GM12878 (cell line): ENCODE measurements at regions of chr15 and their contacts with region 1.

Region 1: DNA sequence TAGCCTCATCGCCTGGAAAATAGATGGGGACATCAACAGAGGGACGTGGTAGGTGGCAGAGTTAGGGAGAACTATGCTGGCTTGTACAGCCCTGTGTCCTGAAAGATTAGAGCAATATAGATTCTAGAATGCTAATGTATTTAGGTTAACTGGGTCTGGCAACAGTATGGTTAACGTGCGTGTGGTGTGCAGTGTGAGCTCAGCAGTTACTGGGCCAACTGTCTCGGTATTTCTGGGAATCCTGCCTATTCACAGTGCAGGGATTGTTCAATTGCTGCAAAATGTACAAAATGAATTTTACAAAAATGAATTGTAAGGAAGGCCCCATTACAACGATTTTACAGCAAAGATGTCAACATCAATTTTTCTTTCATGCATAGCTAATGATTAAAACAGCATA is 20.6 kb downstream of the MEIS2 start:
- DNase-seq: no peak
- ATAC-seq: no peak
- H3K4me3 ChIP-seq: no peak overlapping the region
- H3K27ac ChIP-seq: no peak overlapping the region
- H3K4me1 ChIP-seq: peaks cover 5% of the 10 kb centered on the region; the same call in 1 of the 2 replicates
- H3K27me3 ChIP-seq: no peaks in the 10 kb centered on the region
- CTCF ChIP-seq: no peak
- EP300 ChIP-seq: no peak
- POLR2A ChIP-seq: no peak
- RAD21 ChIP-seq: no peak

Region 2: GRCh38 chr15:36863570-36863969 is 216.2 kb before region 1 on chr15:
- CTCF ChIA-PET with region 1: no interaction called
- POLR2A ChIA-PET with region 1: interaction called, 11 read pairs
- RAD21 ChIA-PET with region 1: no interaction called
- SMC1A ChIA-PET with region 1: no interaction called
- in situ Hi-C with region 1: no loop called
- intact Hi-C with region 1: no loop called
- DNase-seq: no peak
- ATAC-seq: no peak
- H3K4me3 ChIP-seq: no peak overlapping the region
- H3K27ac ChIP-seq: no peak overlapping the region
- H3K4me1 ChIP-seq: no peaks in the 10 kb centered on the region
- H3K27me3 ChIP-seq: no peaks in the 10 kb centered on the region
- CTCF ChIP-seq: no peak
- EP300 ChIP-seq: no peak
- POLR2A ChIP-seq: no peak
- RAD21 ChIP-seq: no peak

Region 3: DNA sequence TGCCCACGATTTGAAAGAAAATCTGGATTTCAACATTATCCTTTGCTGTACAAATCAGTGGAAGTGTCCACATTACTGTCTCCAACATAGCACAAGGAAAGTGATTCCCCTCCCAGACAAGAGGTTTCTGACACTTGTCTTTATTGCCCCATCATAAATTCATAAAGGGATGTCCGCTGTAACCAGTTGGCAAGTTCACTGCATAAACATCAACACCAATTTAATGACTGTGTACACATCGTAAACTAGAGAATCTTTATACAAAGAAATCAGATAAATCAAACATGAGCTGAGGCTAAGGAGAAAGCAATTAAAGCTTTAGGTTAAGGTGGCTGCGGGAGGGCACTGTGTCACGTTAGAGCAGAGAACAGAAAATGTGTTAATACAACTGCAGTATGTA is 109.2 kb before region 1 on chr15:
- CTCF ChIA-PET with region 1: no interaction called
- POLR2A ChIA-PET with region 1: interaction called, 10 read pairs
- RAD21 ChIA-PET with region 1: no interaction called
- SMC1A ChIA-PET with region 1: no interaction called
- in situ Hi-C with region 1: no loop called
- intact Hi-C with region 1: no loop called
- DNase-seq: no peak
- ATAC-seq: no peak
- H3K4me3 ChIP-seq: no peak overlapping the region
- H3K27ac ChIP-seq: no peak overlapping the region
- H3K4me1 ChIP-seq: peaks cover 3% of the 10 kb centered on the region; the same call in 1 of the 2 replicates
- H3K27me3 ChIP-seq: no peaks in the 10 kb centered on the region
- CTCF ChIP-seq: no peak
- EP300 ChIP-seq: no peak
- POLR2A ChIP-seq: no peak
- RAD21 ChIP-seq: no peak

Region 4: GRCh38 chr15:37093480-37094332 is 14.0 kb after region 1 on chr15:
- CTCF ChIA-PET with region 1: interaction called, 3 read pairs
- POLR2A ChIA-PET with region 1: interaction called, 9 read pairs
- RAD21 ChIA-PET with region 1: interaction called, 4 read pairs
- SMC1A ChIA-PET with region 1: interaction called, 32 read pairs
- in situ Hi-C with region 1: no loop called
- intact Hi-C with region 1: no loop called
- DNase-seq: no peak
- ATAC-seq: peak; percentile 30; the same call in 2 of the 3 replicates
- H3K4me3 ChIP-seq: no peak overlapping the region
- H3K27ac ChIP-seq: no peak overlapping the region
- H3K4me1 ChIP-seq: peaks cover 13% of the 10 kb centered on the region
- H3K27me3 ChIP-seq: no peaks in the 10 kb centered on the region; a peak in 1 of 4 replicates
- CTCF ChIP-seq: no peak
- EP300 ChIP-seq: no peak
- POLR2A ChIP-seq: no peak
- RAD21 ChIP-seq: no peak